HepG2 (cell line): ENCODE measurements at regions of chr11 and their contacts with region 1.

Region 1: GRCh38 chr11:89168396-89168795 is 9.3 kb upstream of the TYR start:
- DNase-seq: no peak
- ATAC-seq: no peak
- H3K4me3 ChIP-seq: no peak overlapping the region
- H3K27ac ChIP-seq: no peak overlapping the region
- H3K4me1 ChIP-seq: no peaks in the 10 kb centered on the region
- H3K27me3 ChIP-seq: no peaks in the 10 kb centered on the region
- CTCF ChIP-seq: no peak
- EP300 ChIP-seq: no peak
- POLR2A ChIP-seq: no peak
- RAD21 ChIP-seq: no peak

Region 2: DNA sequence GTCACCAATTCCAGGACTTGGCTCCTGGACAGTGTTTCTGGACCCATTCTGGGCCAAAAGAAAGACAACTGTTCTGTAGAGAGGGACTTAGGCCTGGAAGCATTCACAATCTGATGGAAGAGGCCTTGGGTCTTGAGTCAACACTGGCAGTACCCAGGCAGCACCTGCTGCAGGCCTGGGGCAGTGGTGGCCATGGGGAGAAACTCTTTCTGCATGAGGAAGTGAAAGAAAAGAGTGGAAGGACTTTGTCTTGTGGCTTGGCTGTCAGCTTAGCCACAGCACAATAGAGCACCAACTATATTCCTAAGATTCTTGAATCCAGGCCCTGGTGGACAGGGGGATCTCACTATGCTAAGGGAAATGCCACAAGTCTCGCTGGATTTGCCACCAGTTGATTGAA is 901.5 kb before region 1 on chr11:
- CTCF ChIA-PET with region 1: no interaction called
- POLR2A ChIA-PET with region 1: no interaction called
- in situ Hi-C with region 1: no loop called
- intact Hi-C with region 1: no loop called
- DNase-seq: no peak
- ATAC-seq: no peak
- H3K4me3 ChIP-seq: no peak overlapping the region
- H3K27ac ChIP-seq: no peak overlapping the region
- H3K4me1 ChIP-seq: no peaks in the 10 kb centered on the region
- H3K27me3 ChIP-seq: no peaks in the 10 kb centered on the region
- CTCF ChIP-seq: no peak
- EP300 ChIP-seq: no peak
- POLR2A ChIP-seq: no peak
- RAD21 ChIP-seq: no peak

Region 3: DNA sequence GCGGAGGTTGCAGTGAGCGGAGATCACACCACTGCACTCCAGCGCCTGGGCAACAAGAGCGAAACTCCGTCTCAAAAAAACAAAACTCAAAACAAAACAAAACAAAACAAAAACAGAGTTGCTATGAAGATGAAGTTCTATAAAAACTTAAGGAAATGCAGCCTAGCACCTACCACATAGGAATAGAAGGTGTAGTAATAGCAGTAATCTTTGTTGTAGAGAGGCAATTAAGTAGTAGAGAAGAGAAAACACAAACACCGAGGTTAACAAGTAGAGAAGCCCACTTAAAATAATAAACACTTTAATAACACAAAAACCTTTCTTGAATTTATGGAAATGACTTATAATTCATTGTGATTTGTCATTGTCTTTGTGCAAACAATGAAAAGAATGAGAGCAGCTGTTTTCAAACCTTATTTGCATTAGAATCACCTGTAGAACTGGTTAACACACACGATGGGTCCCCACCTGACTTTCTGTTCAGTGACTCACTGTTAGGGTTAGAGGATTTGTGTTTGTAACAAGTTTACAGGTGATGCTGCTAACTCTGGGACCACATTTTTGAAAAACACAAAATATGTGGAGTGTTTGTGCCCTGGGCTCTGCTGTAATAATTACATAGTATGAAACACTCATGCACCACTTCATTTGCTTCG is 52.4 kb after region 1 on chr11:
- CTCF ChIA-PET with region 1: no interaction called
- POLR2A ChIA-PET with region 1: no interaction called
- in situ Hi-C with region 1: no loop called
- intact Hi-C with region 1: loop called (anchors 10 kb)
- DNase-seq: no peak
- ATAC-seq: no peak
- H3K4me3 ChIP-seq: no peak overlapping the region
- H3K27ac ChIP-seq: no peak overlapping the region
- H3K4me1 ChIP-seq: no peaks in the 10 kb centered on the region
- H3K27me3 ChIP-seq: no peaks in the 10 kb centered on the region
- CTCF ChIP-seq: no peak
- EP300 ChIP-seq: no peak
- POLR2A ChIP-seq: no peak
- RAD21 ChIP-seq: no peak